Cardiac septum (tissue), 1 donor: ENCODE measurements at regions of chr9 and their contacts with region 1.

Region 1: DNA sequence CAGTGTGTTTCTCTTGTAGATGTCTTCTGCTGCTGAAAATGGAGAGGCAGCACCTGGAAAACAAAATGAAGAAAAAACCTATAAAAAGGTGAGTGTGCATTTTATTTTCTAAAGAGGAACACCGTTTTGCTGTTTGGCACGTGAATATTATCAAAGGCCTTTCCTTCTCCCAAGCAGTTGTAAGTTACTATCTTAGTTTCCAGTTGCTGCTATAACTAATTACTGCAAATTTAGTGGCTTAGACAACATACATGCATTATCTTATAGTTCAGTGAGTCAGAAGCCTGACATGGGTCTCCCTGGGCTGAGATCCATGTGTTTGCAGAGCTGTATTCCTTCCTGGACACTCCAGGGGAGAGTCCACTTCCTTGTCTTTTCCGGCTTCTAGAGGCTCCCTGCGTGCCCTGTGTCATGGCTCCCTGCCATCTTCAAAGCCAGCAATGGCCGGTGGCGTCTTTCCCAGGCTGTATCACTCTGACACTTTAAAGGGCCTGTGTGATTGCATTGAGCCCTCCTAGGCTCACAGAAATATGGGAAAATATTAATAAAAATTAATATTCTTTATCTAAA is 117.6 kb downstream of the PIP5K1B start:
- DNase-seq: no peak

Region 2: DNA sequence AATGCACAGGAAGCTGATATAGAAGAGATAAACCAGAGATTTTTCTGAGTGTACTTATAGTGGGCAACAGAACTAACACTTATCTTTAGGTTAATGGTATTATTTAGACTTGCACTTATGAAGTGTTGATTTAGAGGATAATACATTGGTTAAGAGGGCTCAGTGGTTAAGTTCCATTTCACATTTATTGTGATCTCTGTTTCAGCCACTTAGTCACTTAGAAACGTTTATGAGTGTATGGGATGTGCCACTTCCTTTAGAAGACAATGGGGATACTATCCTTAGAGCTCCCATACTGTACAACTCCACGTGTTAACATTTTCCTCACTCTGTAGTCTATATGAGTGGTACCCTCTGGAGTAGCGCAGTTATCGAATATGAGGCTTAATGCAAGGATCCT is 60.1 kb before region 1 on chr9:
- intact Hi-C with region 1: no loop called
- DNase-seq: no peak

Region 3: GRCh38 chr9:68802525-68803015 is 20.1 kb before region 1 on chr9:
- intact Hi-C with region 1: loop called (anchors 2 kb)
- DNase-seq: no peak